ENCODE measurements at regions of chr20 and their contacts with region 1.

Region 1: DNA sequence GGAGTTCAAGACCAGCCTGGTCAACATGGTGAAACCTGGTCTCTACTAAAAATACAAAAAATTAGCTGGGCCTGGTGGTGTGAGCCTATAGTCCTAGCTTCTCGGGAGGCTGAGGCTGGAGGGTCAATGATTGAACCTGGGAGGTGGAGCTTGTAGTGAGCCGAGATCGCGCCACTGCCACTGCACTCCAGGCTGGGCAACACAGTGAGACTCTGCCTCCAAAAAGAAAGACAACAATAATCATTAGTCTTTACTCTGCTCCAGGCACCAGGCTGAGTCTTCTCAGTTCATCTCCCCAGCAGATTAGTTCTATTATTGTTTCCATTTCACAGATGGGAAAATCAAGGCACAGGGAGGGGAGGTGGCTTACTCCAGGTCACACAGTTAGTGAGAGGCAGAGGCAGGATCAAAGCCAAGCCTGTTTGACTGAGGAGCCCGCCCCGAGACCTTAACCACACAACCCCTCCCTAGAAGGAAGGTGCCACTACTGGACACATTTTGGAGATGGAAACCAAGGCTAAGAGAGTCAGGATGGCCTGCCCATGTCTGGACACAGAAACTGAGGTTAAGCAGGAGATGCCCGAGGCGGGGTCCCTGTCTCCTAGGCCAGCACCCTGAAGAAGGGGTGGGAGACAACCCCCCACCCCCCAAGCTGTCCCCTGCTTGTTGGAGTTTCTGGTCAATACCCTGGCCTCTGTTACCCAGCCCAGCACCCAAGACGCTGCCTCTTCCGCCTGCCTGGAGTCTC is 75.8 kb downstream of the CEBPB start:
- DNase-seq: no peak
- ATAC-seq: no peak
- H3K4me3 ChIP-seq: no peak overlapping the region
- H3K27ac ChIP-seq: peak overlapping the region; percentile 63
- H3K4me1 ChIP-seq: peaks cover 37 to 43% of the 10 kb centered on the region in 2 experiments
- H3K27me3 ChIP-seq: no peaks in the 10 kb centered on the region
- CTCF ChIP-seq: no peak
- POLR2A ChIP-seq: no peak
- RAD21 ChIP-seq: no peak

Region 2: DNA sequence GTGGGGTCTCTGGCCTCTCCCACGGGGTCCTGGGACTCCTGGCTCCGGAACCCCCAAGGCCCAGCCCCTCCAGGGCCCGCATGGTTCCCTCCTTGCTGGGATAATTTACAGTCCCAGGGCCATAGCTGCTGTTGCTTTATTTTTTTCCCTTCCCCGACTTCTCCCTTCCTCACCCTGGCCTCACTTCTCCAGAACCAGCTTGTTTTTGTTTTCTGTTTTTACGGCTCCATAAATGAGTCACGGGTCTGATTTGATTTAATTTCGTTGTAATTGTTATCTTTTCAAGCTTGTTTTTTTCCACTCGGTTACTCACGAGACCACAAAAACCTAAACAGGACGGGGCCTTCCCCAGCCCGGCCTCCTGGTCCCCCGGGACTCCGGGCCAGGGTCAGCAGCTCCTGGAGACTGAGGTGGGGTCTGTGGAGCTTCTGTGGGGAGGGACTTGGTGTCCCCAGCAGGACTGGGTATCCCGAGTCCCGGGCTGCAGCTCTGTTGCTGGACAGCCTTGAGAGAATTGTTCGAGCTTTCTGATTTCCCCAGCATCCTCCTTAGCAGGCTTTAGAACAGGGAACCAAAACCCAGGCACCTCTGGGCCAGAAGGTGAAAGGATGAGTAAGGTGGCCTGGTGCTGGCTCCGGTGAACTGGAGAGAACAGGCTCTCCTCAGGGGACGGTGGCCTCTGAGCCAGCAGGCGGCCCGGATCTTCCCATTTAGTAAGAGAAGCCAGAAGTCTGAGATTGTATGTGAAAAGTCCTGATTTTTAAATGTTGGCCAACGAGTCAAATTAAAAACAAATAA is 19.1 kb after region 1 on chr20:
- CTCF ChIA-PET with region 1: no interaction called
- POLR2A ChIA-PET with region 1: interaction called, 11 read pairs
- RAD21 ChIA-PET with region 1: interaction called in 1 of 2 experiments, 5 read pairs
- intact Hi-C with region 1: no loop called
- DNase-seq: no peak
- ATAC-seq: no peak
- H3K4me3 ChIP-seq: peak overlapping the region in 1 of 2 experiments; percentile 34; a peak in 1 of 4 replicates
- H3K27ac ChIP-seq: peak overlapping the region; percentile 91
- H3K4me1 ChIP-seq: peaks cover 49 to 68% of the 10 kb centered on the region in 2 experiments
- H3K27me3 ChIP-seq: no peaks in the 10 kb centered on the region
- CTCF ChIP-seq: no peak
- POLR2A ChIP-seq: no peak
- RAD21 ChIP-seq: no peak

Region 3: DNA sequence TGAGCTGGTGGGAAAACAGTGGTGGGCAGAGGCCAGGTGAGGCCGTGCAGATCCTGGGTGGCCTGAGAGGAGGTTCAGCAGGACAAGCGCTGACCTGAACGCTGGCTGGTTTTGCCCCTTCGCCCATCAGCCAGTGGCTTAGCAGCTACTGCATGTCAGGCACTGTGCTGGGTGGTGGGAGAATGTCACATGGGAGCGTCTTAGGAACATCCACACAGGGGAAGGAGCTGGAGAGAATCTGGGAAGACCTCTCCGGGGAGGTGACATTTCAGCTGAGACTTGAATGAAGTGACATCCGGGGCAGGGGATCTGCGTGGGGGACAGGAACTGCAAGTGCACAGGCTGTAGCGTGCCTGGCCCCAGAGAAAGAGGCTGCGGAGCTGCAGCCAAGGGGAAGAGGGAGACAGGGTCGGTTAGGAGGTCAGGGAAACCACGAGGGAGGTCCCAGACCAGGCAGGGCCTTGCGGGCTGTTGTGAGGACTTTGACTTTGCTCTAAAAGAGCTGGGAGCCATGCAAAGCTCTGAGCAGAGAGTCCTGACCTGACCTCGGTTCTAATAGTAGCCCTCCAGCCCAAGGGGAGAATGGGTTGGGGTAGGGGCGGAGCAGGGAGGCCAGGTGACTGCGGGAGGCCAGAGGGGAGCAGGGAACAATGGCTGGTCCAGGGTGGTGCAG is 87.0 kb after region 1 on chr20:
- CTCF ChIA-PET with region 1: no interaction called
- POLR2A ChIA-PET with region 1: no interaction called
- RAD21 ChIA-PET with region 1: no interaction called
- intact Hi-C with region 1: no loop called
- DNase-seq: no peak
- ATAC-seq: no peak
- H3K4me3 ChIP-seq: no peak overlapping the region
- H3K27ac ChIP-seq: no peak overlapping the region
- H3K4me1 ChIP-seq: peaks cover 3 to 11% of the 10 kb centered on the region in 2 experiments; a peak in 2 of 4 replicates
- H3K27me3 ChIP-seq: no peaks in the 10 kb centered on the region
- CTCF ChIP-seq: no peak
- POLR2A ChIP-seq: no peak
- RAD21 ChIP-seq: no peak

Measured in HCT116 (cell line).